Activated CD4-positive, alpha-beta T cell treated with anti-CD3 and anti-CD28 coated beads for 36 hours (primary cell): ENCODE measurements at regions of chr7 and their contacts with region 1.

Region 1: GRCh38 chr7:120857588-120858573 is at the start of gene TSPAN12:
- DNase-seq: peak; percentile 72
- ATAC-seq: peak; percentile 95
- H3K4me3 Mint-ChIP-seq: peak within 1 kb of the TSS; percentile 71
- H3K27ac Mint-ChIP-seq: no peak within 1 kb of the TSS
- H3K4me1 Mint-ChIP-seq: peaks cover 8% of the 10 kb centered on the region
- H3K27me3 Mint-ChIP-seq: peaks cover 47% of the 10 kb centered on the region
- total RNA-seq, gene TSPAN12: not detected

Region 2: GRCh38 chr7:120933475-120933874 is 75.6 kb after region 1 on chr7:
- CTCF ChIA-PET with region 1: no interaction called
- POLR2A ChIA-PET with region 1: no interaction called
- intact Hi-C with region 1: no loop called
- DNase-seq: no peak
- ATAC-seq: peak; percentile 58
- H3K4me3 Mint-ChIP-seq: no peak overlapping the region
- H3K27ac Mint-ChIP-seq: no peak overlapping the region
- H3K4me1 Mint-ChIP-seq: peaks cover 2% of the 10 kb centered on the region
- H3K27me3 Mint-ChIP-seq: peaks cover 10% of the 10 kb centered on the region

Region 3: DNA sequence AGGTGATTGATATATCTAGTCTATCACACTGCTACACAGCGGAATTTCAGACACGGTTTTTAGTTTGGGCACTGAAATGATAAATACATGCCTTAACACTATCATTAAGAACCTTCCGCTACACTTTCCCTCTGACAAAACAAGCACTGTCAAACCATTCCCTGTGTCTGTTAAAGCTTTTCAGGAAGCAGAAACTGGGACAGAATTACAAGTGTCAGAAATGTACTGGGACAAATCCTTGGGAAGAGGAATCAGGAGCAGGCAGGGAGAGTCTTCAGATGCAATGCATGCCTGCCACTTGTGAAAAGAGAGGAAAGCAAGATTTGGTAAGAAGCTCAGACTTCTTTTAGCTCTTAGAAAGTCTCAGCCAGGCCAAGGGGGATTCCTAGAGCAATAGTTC is 818.3 kb after region 1 on chr7:
- CTCF ChIA-PET with region 1: no interaction called
- POLR2A ChIA-PET with region 1: no interaction called
- intact Hi-C with region 1: loop called in 1 of 2 experiments (anchors 5 kb)
- DNase-seq: no peak
- ATAC-seq: no peak
- H3K4me3 Mint-ChIP-seq: no peak overlapping the region
- H3K27ac Mint-ChIP-seq: no peak overlapping the region
- H3K4me1 Mint-ChIP-seq: no peaks in the 10 kb centered on the region
- H3K27me3 Mint-ChIP-seq: peaks cover 2% of the 10 kb centered on the region